Heart left ventricle (tissue), 16 donors: ENCODE measurements at regions of chr19 and their contacts with region 1.

Region 1: GRCh38 chr19:56140583-56141416 is at the start of gene ZNF444:
- DNase-seq: peak; percentile 99 to 100 (median 99)
- ATAC-seq: peak; percentile 93 to 95 (median 94)
- H3K4me3 ChIP-seq: peak within 1 kb of the TSS; percentile 31 to 87 (median 68)
- H3K27ac ChIP-seq: peak within 1 kb of the TSS; percentile 67 to 95 (median 86)
- H3K4me1 ChIP-seq: peaks cover 0 to 28% (median 12%) of the 10 kb centered on the region in 12 donors
- H3K27me3 ChIP-seq: no peaks in the 10 kb centered on the region
- CTCF ChIP-seq: no peak
- POLR2A ChIP-seq: peak in 1 of 2 donors; percentile 61
- total RNA-seq, gene ZNF444: 14.8 to 35.8 (median 20.1) TPM

Region 2: GRCh38 chr19:56099638-56100539 is 40.9 kb before region 1 on chr19:
- intact Hi-C with region 1: loop called in 2 of 10 experiments (anchors 5 kb)
- DNase-seq: peak in 1 of 5 donors; percentile 49
- ATAC-seq: no peak
- H3K4me3 ChIP-seq: no peak overlapping the region
- H3K27ac ChIP-seq: no peak overlapping the region
- H3K4me1 ChIP-seq: peaks cover 0 to 29% (median 8%) of the 10 kb centered on the region in 12 donors
- H3K27me3 ChIP-seq: no peaks in the 10 kb centered on the region
- CTCF ChIP-seq: no peak
- POLR2A ChIP-seq: no peak

Region 3: DNA sequence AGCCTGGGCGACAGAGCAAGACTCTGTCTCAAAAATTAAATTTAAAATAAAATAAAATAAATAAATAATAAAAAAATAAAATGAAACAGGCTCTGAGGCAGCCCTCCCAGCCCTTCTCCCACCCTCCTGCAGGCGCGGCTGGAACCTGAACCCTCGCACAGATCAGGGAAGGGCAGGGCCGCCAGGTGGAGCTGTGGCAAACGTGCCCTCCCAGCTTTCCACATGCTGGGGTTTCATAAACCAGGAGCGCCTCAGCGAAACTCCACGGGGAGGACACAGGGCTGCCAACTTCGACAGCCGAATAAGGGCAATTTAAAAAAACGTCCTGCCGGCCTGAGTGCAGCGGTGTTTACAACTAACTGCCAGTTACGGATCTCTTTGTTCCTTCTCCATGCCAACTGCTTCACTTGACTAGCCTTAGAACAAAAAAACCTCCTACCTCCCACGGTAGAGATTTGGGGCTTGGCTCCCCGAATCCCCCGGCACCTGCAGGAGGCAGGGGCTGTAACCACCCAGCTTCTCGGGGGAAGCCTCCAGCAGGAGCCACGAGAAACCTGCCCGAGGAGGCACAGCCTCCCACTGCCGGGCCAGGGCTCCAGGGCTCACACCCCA is 35.6 kb before region 1 on chr19:
- intact Hi-C with region 1: loop called in 2 of 10 experiments (anchors 5 kb)
- DNase-seq: peak in 4 of 5 donors; percentile 56 to 77 (median 66)
- ATAC-seq: peak; percentile 67 to 84 (median 74)
- H3K4me3 ChIP-seq: peak overlapping the region in 2 of 12 donors; percentile 15 to 16
- H3K27ac ChIP-seq: peak overlapping the region in 5 of 12 donors; percentile 18 to 84 (median 37)
- H3K4me1 ChIP-seq: peaks cover 14 to 51% (median 36%) of the 10 kb centered on the region in 12 donors
- H3K27me3 ChIP-seq: no peaks in the 10 kb centered on the region
- CTCF ChIP-seq: peak; percentile 40 to 78 (median 65)
- POLR2A ChIP-seq: no peak

Region 4: DNA sequence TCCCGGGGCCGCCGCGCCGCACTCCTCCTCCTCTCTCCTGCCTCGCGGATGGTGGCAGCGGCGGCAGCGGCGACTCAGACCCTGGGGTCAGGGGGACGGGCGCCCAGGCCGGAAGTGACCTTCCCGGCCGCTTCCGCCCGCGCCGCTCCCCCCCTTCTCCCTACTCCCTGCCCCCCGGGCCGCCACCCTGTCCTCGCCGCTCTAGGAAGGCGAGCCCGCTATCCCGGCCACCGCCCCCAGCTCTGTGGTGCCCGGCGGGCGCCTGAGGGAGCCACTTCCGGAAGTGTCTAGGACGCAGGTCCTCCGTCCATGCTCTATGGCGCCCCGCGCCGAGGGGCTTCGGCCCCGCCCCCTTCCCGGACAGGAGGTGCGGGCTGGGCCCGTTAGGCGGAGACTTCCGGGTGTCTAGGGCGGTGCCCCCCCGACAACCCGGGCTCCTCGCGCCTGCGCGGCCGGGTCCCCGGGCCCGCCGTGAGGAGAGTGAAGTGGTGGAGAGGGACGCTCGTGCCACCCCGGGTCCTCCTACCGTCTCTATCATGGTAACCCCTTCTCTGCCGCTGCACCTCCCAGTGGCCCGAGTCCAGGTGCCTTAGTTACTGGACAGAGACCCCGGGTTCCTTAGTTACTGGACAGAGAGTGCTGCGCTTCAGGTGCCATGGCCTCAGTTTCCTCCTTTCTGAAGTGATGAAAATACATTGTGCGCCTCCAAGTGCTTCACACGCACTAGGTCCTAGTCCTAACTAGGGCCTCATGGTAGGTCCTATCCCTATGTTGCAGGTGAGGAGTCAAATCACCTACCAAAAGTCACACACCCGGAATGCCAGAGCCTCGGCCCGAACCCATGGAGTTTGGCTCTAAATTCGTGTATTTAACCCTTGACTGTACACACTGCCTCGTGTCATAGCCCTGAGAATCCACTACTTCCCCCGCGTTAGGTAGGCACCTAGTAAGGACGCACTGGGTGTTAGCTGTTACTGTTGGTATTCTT is 19.3 kb before region 1 on chr19 and contains the start of gene ZNF787:
- intact Hi-C with region 1: loop called in 6 of 10 experiments (anchors 1 to 2 kb)
- DNase-seq: peak; percentile 98 to 100 (median 99)
- ATAC-seq: peak; percentile 94 to 95 (median 95)
- H3K4me3 ChIP-seq: peak within 1 kb of the TSS; percentile 54 to 97 (median 82)
- H3K27ac ChIP-seq: peak within 1 kb of the TSS; percentile 89 to 100 (median 95)
- H3K4me1 ChIP-seq: peaks cover 12 to 45% (median 37%) of the 10 kb centered on the region in 12 donors
- H3K27me3 ChIP-seq: no peaks in the 10 kb centered on the region
- CTCF ChIP-seq: peak in 2 of 12 donors; percentile 11 to 14
- POLR2A ChIP-seq: peak in 1 of 2 donors; percentile 53
- total RNA-seq, gene ZNF787: 11.6 to 40.8 (median 24.9) TPM